BJ (cell line): ENCODE measurements at regions of chr20 and their contacts with region 1.

Region 1: DNA sequence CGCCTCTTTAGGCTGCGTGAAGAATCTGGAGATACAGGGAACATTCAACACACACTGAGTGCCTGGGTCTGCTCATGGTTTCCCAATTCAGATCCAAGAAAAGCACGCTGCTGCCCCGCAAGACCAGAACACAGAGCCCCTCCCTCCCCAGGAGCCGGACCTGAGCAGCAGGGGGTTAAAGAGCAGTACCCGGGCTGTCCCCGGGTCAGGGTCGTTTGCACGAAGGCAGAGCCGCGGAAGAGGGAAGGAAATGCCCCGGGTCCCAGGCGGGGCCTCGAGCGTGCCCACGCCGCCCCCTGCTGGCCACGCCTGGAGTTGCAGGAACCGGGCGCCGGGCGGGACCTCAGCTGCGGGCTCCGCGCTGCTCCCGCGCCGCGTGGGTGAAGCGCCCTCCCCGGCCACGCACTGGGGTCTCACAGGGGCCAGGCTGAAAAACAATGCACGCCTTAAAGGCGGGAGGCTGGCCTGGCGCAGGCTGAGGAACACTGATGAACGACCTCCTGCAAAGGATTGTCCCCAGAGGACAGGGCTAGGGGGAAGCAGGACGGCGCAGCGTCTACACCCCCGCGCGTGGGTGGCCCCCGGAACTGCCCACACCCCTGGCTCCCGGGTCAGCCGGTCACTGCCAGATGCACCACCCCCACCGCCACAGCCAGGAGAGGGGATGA is 48.9 kb downstream of the ANKRD60 start:
- DNase-seq: no peak
- H3K4me3 ChIP-seq: peak overlapping the region; percentile 21; the same call in 1 of the 2 replicates
- H3K27me3 ChIP-seq: peaks cover 11% of the 10 kb centered on the region
- CTCF ChIP-seq: peak; percentile 82

Region 2: GRCh38 chr20:58169450-58169849 is 10.1 kb before region 1 on chr20:
- CTCF ChIA-PET with region 1: interaction called, 13 read pairs
- POLR2A ChIA-PET with region 1: no interaction called
- DNase-seq: peak; percentile 50
- H3K4me3 ChIP-seq: no peak overlapping the region
- H3K27me3 ChIP-seq: no peaks in the 10 kb centered on the region
- CTCF ChIP-seq: no peak